MCF 10A (cell line): ENCODE measurements at regions of chrX and their contacts with region 1.

Region 1: GRCh38 chrX:108299101-108299591 is 139.1 kb downstream of the COL4A6 start:
- DNase-seq: peak; percentile 55
- H3K4me3 Mint-ChIP-seq: no peak overlapping the region
- H3K27ac Mint-ChIP-seq: peak overlapping the region; percentile 82
- H3K4me1 Mint-ChIP-seq: peaks cover 5% of the 10 kb centered on the region
- H3K27me3 Mint-ChIP-seq: peaks cover 61% of the 10 kb centered on the region
- CTCF ChIP-seq: no peak

Region 2: GRCh38 chrX:108261549-108262203 is 37.5 kb before region 1 on chrX:
- CTCF ChIA-PET with region 1: no interaction called
- POLR2A ChIA-PET with region 1: interaction called, 10 read pairs
- intact Hi-C with region 1: no loop called
- DNase-seq: peak; percentile 92
- H3K4me3 Mint-ChIP-seq: no peak overlapping the region
- H3K27ac Mint-ChIP-seq: peak overlapping the region; percentile 81
- H3K4me1 Mint-ChIP-seq: peaks cover 25% of the 10 kb centered on the region
- H3K27me3 Mint-ChIP-seq: peaks cover 47% of the 10 kb centered on the region
- CTCF ChIP-seq: no peak

Region 3: GRCh38 chrX:108537005-108537404 is 237.9 kb after region 1 on chrX:
- CTCF ChIA-PET with region 1: no interaction called
- POLR2A ChIA-PET with region 1: interaction called, 3 read pairs
- intact Hi-C with region 1: loop called (anchors 5 kb)
- DNase-seq: peak; percentile 56
- H3K4me3 Mint-ChIP-seq: no peak overlapping the region
- H3K27ac Mint-ChIP-seq: no peak overlapping the region
- H3K4me1 Mint-ChIP-seq: no peaks in the 10 kb centered on the region
- H3K27me3 Mint-ChIP-seq: peaks cover 59% of the 10 kb centered on the region
- CTCF ChIP-seq: peak; percentile 71